CD8-positive, alpha-beta T cell (primary cell): ENCODE measurements at regions of chr4 and their contacts with region 1.

Region 1: GRCh38 chr4:76251441-76252270 is at the start of gene FAM47E:
- DNase-seq: peak; percentile 3 to 55 (median 19)
- ATAC-seq: peak; percentile 62
- H3K4me3 ChIP-seq: peak within 1 kb of the TSS; percentile 41 to 57
- H3K4me3 Mint-ChIP-seq: peak within 1 kb of the TSS; percentile 80
- H3K27ac ChIP-seq: no peak within 1 kb of the TSS
- H3K27ac Mint-ChIP-seq: no peak within 1 kb of the TSS
- H3K4me1 ChIP-seq: peaks cover 6% of the 10 kb centered on the region
- H3K4me1 Mint-ChIP-seq: peaks cover 7% of the 10 kb centered on the region
- H3K27me3 ChIP-seq: peaks cover 12 to 21% of the 10 kb centered on the region in 2 experiments
- H3K27me3 Mint-ChIP-seq: peaks cover 56% of the 10 kb centered on the region
- CTCF ChIP-seq: no peak
- total RNA-seq, gene FAM47E: 0.19 to 0.44 TPM

Region 2: GRCh38 chr4:76377911-76378310 is 126.3 kb after region 1 on chr4:
- CTCF ChIA-PET with region 1: interaction called, 12 read pairs
- POLR2A ChIA-PET with region 1: no interaction called
- intact Hi-C with region 1: no loop called
- DNase-seq: peak; percentile 11 to 62 (median 37)
- ATAC-seq: peak; percentile 49
- H3K4me3 ChIP-seq: no peak overlapping the region
- H3K4me3 Mint-ChIP-seq: no peak overlapping the region
- H3K27ac ChIP-seq: no peak overlapping the region
- H3K27ac Mint-ChIP-seq: no peak overlapping the region
- H3K4me1 ChIP-seq: no peaks in the 10 kb centered on the region
- H3K4me1 Mint-ChIP-seq: no peaks in the 10 kb centered on the region
- H3K27me3 ChIP-seq: no peaks in the 10 kb centered on the region
- H3K27me3 Mint-ChIP-seq: no peaks in the 10 kb centered on the region
- CTCF ChIP-seq: peak; percentile 60

Region 3: GRCh38 chr4:76723924-76724323 is 472.3 kb after region 1 on chr4:
- CTCF ChIA-PET with region 1: no interaction called
- POLR2A ChIA-PET with region 1: no interaction called
- intact Hi-C with region 1: no loop called
- DNase-seq: no peak
- ATAC-seq: no peak
- H3K4me3 ChIP-seq: no peak overlapping the region
- H3K4me3 Mint-ChIP-seq: no peak overlapping the region
- H3K27ac ChIP-seq: no peak overlapping the region
- H3K27ac Mint-ChIP-seq: no peak overlapping the region
- H3K4me1 ChIP-seq: no peaks in the 10 kb centered on the region
- H3K4me1 Mint-ChIP-seq: no peaks in the 10 kb centered on the region
- H3K27me3 ChIP-seq: no peaks in the 10 kb centered on the region
- H3K27me3 Mint-ChIP-seq: peaks cover 2% of the 10 kb centered on the region
- CTCF ChIP-seq: no peak